GM12878 (cell line): ENCODE measurements at regions of chr18 and their contacts with region 1.

Region 1: DNA sequence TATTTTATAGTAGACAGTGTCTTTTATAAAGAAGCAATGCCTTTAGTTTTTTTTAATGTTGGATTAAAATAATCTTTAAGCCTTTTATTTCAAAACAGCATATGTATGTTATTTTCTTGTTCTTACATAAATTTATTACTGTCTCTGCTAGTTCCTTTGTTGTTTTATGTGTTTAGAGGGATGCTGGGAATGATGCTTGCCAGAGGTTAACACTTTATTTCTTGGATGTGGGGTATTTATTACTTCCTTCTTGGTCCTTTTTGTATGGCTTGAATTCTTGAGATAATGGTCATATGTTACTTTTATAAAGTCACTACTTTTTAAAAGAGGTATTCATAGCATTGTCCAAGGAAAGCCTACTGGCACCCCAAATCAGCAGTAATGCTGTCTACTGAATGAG is 63.1 kb downstream of the ANKRD12 start:
- DNase-seq: no peak
- ATAC-seq: no peak
- H3K4me3 ChIP-seq: no peak overlapping the region
- H3K27ac ChIP-seq: no peak overlapping the region
- H3K4me1 ChIP-seq: no peaks in the 10 kb centered on the region
- H3K27me3 ChIP-seq: no peaks in the 10 kb centered on the region
- CTCF ChIP-seq: no peak
- EP300 ChIP-seq: no peak
- POLR2A ChIP-seq: no peak
- RAD21 ChIP-seq: no peak

Region 2: DNA sequence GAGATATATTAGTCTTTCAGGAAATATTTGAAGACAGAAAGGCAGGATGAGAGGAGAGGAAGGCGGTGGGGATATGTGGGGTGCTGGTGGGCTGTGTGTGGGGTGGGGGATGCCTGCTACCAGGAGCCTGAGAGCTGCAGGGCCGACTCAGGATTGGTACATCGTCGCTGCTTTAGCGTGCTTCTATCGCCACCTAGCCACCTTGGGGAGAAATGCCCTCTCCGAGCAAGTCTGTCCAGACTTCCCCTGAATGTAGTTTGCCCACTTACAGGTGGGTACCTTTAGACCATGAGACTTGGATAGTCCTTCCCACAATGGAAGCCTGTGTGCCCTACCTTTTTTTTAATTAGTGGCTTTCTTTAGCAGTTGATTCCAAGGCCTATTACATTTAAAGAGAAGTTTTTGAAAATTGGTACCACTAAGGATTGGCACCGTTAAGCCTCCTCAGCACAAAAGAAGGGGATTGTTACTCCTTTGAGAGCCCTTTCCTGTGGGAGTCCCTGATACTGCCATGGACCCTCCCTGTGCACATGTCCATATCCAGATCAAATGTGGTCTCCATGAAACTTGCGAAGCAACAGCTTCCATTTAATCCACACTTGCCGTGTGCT is 211.3 kb before region 1 on chr18:
- CTCF ChIA-PET with region 1: no interaction called
- POLR2A ChIA-PET with region 1: no interaction called
- RAD21 ChIA-PET with region 1: no interaction called
- SMC1A ChIA-PET with region 1: no interaction called
- in situ Hi-C with region 1: no loop called
- intact Hi-C with region 1: no loop called
- DNase-seq: no peak
- ATAC-seq: peak; percentile 98
- H3K4me3 ChIP-seq: no peak overlapping the region
- H3K27ac ChIP-seq: no peak overlapping the region
- H3K4me1 ChIP-seq: peaks cover 3% of the 10 kb centered on the region
- H3K27me3 ChIP-seq: no peaks in the 10 kb centered on the region
- CTCF ChIP-seq: peak; percentile 89 to 91 (median 91); a peak in 5 of 6 replicates
- EP300 ChIP-seq: no peak
- POLR2A ChIP-seq: no peak
- RAD21 ChIP-seq: peak; percentile 91

Region 3: GRCh38 chr18:9153256-9153655 is 46.4 kb before region 1 on chr18:
- CTCF ChIA-PET with region 1: no interaction called
- POLR2A ChIA-PET with region 1: no interaction called
- RAD21 ChIA-PET with region 1: no interaction called
- SMC1A ChIA-PET with region 1: no interaction called
- in situ Hi-C with region 1: no loop called
- intact Hi-C with region 1: no loop called
- DNase-seq: no peak
- ATAC-seq: no peak
- H3K4me3 ChIP-seq: no peak overlapping the region
- H3K27ac ChIP-seq: no peak overlapping the region
- H3K4me1 ChIP-seq: peaks cover 8% of the 10 kb centered on the region
- H3K27me3 ChIP-seq: no peaks in the 10 kb centered on the region
- CTCF ChIP-seq: no peak
- EP300 ChIP-seq: no peak
- POLR2A ChIP-seq: no peak
- RAD21 ChIP-seq: no peak

Region 4: DNA sequence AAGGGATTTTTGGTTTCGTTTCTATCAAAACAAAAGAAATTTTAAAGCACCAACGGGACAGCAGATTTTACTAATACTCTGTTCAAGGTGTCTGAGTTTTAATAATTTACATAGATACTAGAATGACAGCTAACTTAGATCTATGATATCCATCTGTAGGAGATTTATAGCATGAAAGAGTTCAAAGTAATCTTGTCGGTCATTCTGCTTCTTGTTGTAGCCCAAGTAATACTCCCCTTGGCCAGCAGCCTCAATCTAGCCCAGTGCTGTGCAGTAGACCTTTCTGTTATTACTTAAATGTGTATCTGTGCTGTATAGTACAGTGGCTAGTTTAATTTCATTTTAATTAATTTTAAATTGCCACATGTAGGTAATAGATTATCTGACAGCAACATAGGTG is 18.4 kb before region 1 on chr18:
- CTCF ChIA-PET with region 1: no interaction called
- POLR2A ChIA-PET with region 1: no interaction called
- RAD21 ChIA-PET with region 1: no interaction called
- SMC1A ChIA-PET with region 1: interaction called, 4 read pairs
- in situ Hi-C with region 1: no loop called
- intact Hi-C with region 1: loop called (anchors 2 kb)
- DNase-seq: no peak
- ATAC-seq: peak; percentile 67
- H3K4me3 ChIP-seq: no peak overlapping the region
- H3K27ac ChIP-seq: no peak overlapping the region; the same call in 1 of the 2 replicates
- H3K4me1 ChIP-seq: peaks cover 15% of the 10 kb centered on the region
- H3K27me3 ChIP-seq: no peaks in the 10 kb centered on the region
- CTCF ChIP-seq: no peak
- EP300 ChIP-seq: no peak
- POLR2A ChIP-seq: no peak
- RAD21 ChIP-seq: no peak

Region 5: GRCh38 chr18:9223356-9223755 is 23.7 kb after region 1 on chr18:
- CTCF ChIA-PET with region 1: no interaction called
- POLR2A ChIA-PET with region 1: no interaction called
- RAD21 ChIA-PET with region 1: no interaction called
- SMC1A ChIA-PET with region 1: interaction called, 3 read pairs
- in situ Hi-C with region 1: no loop called
- intact Hi-C with region 1: loop called (anchors 2 kb)
- DNase-seq: no peak
- ATAC-seq: no peak
- H3K4me3 ChIP-seq: no peak overlapping the region
- H3K27ac ChIP-seq: no peak overlapping the region
- H3K4me1 ChIP-seq: no peaks in the 10 kb centered on the region
- H3K27me3 ChIP-seq: no peaks in the 10 kb centered on the region
- CTCF ChIP-seq: no peak
- EP300 ChIP-seq: no peak
- POLR2A ChIP-seq: no peak
- RAD21 ChIP-seq: no peak

Region 6: DNA sequence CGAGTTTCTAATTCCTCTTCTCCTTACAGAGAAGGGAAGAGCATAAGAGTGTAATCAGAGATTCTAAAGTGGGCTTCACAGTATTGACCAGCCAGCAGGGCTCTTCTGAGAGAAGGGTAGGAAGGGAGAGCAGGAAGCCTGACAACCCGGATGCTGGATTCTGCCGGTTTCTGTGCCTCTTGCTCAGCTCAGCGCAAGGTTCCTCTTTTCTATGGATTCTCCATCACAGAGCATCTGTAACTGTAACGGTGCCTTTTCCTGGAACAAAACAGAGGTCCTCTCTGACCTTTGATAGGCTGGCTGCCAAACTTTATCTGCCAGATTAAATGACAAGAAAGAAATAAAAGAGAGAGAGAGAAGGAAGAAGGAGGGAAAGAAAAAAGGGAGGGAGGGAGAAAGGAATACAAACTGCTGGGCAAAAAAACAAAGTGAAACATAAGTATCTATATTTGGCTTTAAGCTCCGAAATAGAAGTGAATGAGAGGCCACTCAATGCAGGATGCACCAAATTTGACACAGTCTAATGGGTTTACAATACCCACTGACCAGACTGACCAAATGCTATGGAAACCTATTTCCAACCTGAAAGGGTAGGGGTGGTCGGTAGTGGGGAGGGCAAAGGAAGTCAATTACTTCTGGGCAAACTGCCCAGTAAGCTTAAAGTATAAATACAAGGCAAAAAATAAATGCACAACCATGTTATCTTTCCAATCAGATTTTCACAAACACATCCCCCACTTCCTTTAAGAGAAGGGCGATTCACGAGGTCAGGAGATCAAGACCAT is 1890.4 kb after region 1 on chr18:
- CTCF ChIA-PET with region 1: no interaction called
- POLR2A ChIA-PET with region 1: no interaction called
- RAD21 ChIA-PET with region 1: no interaction called
- SMC1A ChIA-PET with region 1: no interaction called
- in situ Hi-C with region 1: no loop called
- intact Hi-C with region 1: no loop called
- DNase-seq: no peak
- ATAC-seq: peak; percentile 51
- H3K4me3 ChIP-seq: peak overlapping the region; percentile 36; the same call in 1 of the 2 replicates
- H3K27ac ChIP-seq: peak overlapping the region; percentile 56
- H3K4me1 ChIP-seq: peaks cover 26% of the 10 kb centered on the region
- H3K27me3 ChIP-seq: no peaks in the 10 kb centered on the region
- CTCF ChIP-seq: no peak
- EP300 ChIP-seq: no peak
- POLR2A ChIP-seq: no peak
- RAD21 ChIP-seq: no peak